T-cell (primary cell): ENCODE measurements at regions of chr1 and their contacts with region 1.

Region 1: DNA sequence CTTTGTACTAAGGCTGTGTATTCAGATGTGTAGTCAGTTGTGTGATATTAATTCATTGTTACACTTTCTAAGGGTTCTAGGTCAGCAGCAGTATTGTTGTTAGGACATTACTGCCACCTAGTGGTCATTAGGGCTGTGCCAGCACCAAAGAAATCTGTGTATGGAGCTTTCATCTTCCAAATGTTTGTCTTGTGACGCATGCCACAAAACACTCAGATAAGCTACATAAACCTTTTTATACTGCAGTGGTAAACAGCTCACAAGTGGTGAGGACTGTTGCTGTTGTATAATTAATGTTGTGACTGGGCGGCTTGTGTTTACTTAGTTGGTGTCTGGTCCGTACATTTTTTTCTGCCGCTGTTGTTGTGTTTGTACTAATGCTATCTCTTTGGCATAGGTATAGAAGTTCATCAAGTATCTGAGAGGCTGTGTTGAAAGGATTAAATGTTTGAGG is 51.7 kb downstream of the S1PR1 start:
- DNase-seq: peak in 34 of 35 experiments; percentile 29 to 90 (median 62)
- ATAC-seq: peak; percentile 62 to 68 (median 64)
- H3K4me3 ChIP-seq: no peak overlapping the region
- H3K4me3 Mint-ChIP-seq: peak overlapping the region in 2 of 3 donors; percentile 4 to 24
- H3K27ac ChIP-seq: peak overlapping the region; percentile 35
- H3K27ac Mint-ChIP-seq: peak overlapping the region; percentile 79 to 85
- H3K4me1 ChIP-seq: peaks cover 70 to 75% of the 10 kb centered on the region in 2 experiments
- H3K4me1 Mint-ChIP-seq: peaks cover 76 to 89% (median 84%) of the 10 kb centered on the region in 3 donors
- H3K27me3 ChIP-seq: no peaks in the 10 kb centered on the region
- H3K27me3 Mint-ChIP-seq: no peaks in the 10 kb centered on the region

Region 2: DNA sequence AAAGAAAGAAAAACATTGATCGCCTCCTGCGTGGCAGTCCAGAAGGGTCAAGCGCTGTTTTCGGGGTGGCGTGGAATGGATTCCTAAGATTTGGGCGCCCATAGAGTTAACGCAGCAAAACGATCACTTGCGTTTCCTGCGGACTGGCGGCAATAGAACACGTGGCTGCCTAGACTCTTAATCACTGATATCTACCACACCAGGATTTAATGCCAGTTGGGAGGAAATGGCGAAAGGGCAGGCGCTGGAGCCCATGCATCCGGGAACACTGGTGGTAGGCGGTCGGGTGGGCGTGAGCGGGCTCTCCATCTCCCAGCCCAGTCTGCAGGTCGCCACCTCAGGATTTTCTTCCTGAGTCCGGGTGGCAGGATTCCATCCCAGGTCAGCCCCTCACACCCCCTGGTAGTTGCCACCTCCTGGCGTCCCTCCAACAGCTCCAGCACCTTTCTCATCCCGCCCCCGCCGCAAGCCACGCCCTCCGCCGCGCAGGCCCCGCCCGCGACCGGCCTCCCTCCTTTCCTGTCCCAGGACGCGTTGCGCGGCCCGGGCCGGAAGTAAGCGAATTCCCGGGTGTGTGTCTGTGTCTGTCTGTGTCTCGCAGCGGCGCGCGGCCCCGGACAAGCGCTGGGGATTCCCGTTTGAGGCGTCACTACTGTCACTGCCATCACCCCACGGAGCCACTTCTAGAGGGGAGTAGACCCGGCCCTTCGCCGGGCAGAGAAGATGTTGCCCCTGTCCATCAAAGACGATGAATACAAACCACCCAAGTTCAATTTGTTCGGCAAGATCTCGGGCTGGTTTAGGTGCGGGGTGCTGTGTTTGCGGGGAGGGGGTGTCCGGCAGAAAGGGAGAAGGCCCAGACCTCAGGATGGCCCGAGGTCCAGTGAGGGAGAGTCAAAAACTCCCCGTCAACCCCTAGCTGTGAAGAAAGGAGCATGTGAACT is 392.7 kb before region 1 on chr1 and contains the start of gene SLC30A7:
- CTCF ChIA-PET with region 1: interaction called in 1 of 2 experiments, 10 read pairs
- POLR2A ChIA-PET with region 1: interaction called in 1 of 2 experiments, 3 read pairs
- DNase-seq: peak; percentile 91 to 98 (median 95)
- ATAC-seq: peak; percentile 83 to 88 (median 85)
- H3K4me3 ChIP-seq: peak within 1 kb of the TSS; percentile 87 to 99
- H3K4me3 Mint-ChIP-seq: peak within 1 kb of the TSS; percentile 99 to 100 (median 100)
- H3K27ac ChIP-seq: peak within 1 kb of the TSS; percentile 98
- H3K27ac Mint-ChIP-seq: peak within 1 kb of the TSS; percentile 99
- H3K4me1 ChIP-seq: peaks cover 5 to 29% of the 10 kb centered on the region in 2 experiments
- H3K4me1 Mint-ChIP-seq: peaks cover 47 to 57% (median 55%) of the 10 kb centered on the region in 3 donors
- H3K27me3 ChIP-seq: no peaks in the 10 kb centered on the region
- H3K27me3 Mint-ChIP-seq: no peaks in the 10 kb centered on the region
- total RNA-seq, gene SLC30A7: 28.8 to 44.1 (median 36.9) TPM

Region 3: DNA sequence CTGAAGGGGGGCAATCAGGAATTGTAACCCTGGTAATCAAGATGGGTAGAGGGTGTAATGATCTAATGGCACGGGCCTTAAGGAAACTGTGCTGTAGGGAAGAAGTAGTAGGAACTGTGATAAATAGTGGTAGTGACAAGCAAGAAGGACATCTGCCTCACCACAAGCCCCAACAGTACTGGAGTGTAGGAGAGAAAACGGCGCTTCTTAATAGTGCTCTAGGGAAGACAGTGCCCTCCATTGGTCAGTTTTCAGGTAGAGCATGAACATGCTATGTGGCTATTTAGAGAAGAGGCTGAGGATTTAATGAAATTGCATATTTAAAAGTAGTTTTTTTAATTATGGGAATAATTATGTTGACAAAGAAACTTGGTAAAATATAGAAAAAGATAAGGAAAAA is 360.4 kb before region 1 on chr1:
- CTCF ChIA-PET with region 1: interaction called, 6 to 92 read pairs
- POLR2A ChIA-PET with region 1: interaction called, 3 to 5 read pairs
- DNase-seq: peak in 1 of 35 experiments; percentile 57
- ATAC-seq: no peak
- H3K4me3 ChIP-seq: peak overlapping the region; percentile 23 to 50
- H3K4me3 Mint-ChIP-seq: no peak overlapping the region
- H3K27ac ChIP-seq: peak overlapping the region; percentile 78
- H3K27ac Mint-ChIP-seq: no peak overlapping the region
- H3K4me1 ChIP-seq: peaks cover 32 to 82% of the 10 kb centered on the region in 2 experiments
- H3K4me1 Mint-ChIP-seq: peaks cover 17 to 38% (median 37%) of the 10 kb centered on the region in 3 donors
- H3K27me3 ChIP-seq: no peaks in the 10 kb centered on the region
- H3K27me3 Mint-ChIP-seq: no peaks in the 10 kb centered on the region

Region 4: GRCh38 chr1:101095576-101095975 is 192.9 kb before region 1 on chr1:
- CTCF ChIA-PET with region 1: no interaction called
- POLR2A ChIA-PET with region 1: no interaction called
- DNase-seq: no peak
- ATAC-seq: no peak
- H3K4me3 ChIP-seq: no peak overlapping the region
- H3K4me3 Mint-ChIP-seq: no peak overlapping the region
- H3K27ac ChIP-seq: no peak overlapping the region
- H3K27ac Mint-ChIP-seq: no peak overlapping the region
- H3K4me1 ChIP-seq: no peaks in the 10 kb centered on the region
- H3K4me1 Mint-ChIP-seq: peaks cover 0 to 5% (median 5%) of the 10 kb centered on the region in 3 donors
- H3K27me3 ChIP-seq: no peaks in the 10 kb centered on the region
- H3K27me3 Mint-ChIP-seq: no peaks in the 10 kb centered on the region

Region 5: GRCh38 chr1:101238681-101239094 is 49.8 kb before region 1 on chr1:
- CTCF ChIA-PET with region 1: interaction called, 10 to 82 read pairs
- POLR2A ChIA-PET with region 1: interaction called, 5 to 6 read pairs
- DNase-seq: peak; percentile 51 to 90 (median 81)
- ATAC-seq: peak; percentile 18 to 38 (median 32)
- H3K4me3 ChIP-seq: peak overlapping the region; percentile 67 to 99
- H3K4me3 Mint-ChIP-seq: peak overlapping the region; percentile 97 to 99 (median 98)
- H3K27ac ChIP-seq: peak overlapping the region; percentile 56
- H3K27ac Mint-ChIP-seq: peak overlapping the region; percentile 98 to 100
- H3K4me1 ChIP-seq: peaks cover 44 to 50% of the 10 kb centered on the region in 2 experiments
- H3K4me1 Mint-ChIP-seq: peaks cover 60 to 64% (median 62%) of the 10 kb centered on the region in 3 donors
- H3K27me3 ChIP-seq: no peaks in the 10 kb centered on the region
- H3K27me3 Mint-ChIP-seq: no peaks in the 10 kb centered on the region

Region 6: DNA sequence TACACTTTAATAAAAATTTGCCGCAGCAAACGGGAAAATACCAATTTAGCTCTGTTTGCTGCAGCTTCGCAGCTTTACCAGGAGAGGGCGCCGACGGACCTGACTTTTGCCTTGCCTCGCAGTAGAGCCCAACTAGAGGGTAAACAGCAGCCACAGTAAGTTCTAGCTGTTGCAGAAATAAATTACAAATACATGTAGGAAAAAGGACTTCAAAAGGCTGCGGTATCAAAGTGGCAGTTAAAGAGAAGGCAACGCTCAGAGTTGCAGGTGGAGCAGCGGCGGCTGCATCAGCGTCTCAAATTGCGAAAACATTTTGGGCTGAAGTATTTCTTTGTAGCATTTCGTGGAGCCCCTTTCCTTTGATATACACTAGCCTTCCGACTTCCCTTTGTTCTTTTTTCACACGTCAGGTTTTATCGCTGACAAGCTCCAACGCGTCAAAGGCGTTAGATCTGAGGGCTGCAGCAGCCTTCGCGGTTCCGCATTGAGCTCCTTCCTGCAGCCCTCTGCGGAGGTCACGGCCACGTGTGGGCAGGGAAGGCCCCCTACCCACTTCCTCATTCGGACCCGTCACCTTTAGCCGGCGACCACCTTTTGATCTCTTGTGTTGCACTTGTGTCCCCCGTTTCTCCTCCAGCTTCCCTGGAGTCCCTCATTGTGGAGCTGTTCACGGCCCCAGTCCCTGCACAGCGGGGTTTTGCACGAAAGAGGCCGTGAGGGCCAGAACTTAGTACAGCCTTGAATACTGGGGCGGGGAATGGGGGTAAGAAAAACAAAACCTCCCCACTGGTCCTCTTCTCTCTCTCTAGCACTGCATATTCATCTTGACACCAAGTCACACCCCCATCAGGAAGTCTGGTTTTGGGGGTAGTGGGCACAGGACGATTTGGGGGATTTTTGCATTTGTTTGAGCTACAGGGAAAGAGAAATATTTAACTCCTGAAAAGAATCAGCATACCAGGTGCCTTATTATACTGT is 21.1 kb after region 1 on chr1:
- CTCF ChIA-PET with region 1: interaction called, 11 to 111 read pairs
- POLR2A ChIA-PET with region 1: interaction called in 1 of 2 experiments, 11 read pairs
- DNase-seq: peak; percentile 56 to 93 (median 78)
- ATAC-seq: peak; percentile 79 to 82 (median 80)
- H3K4me3 ChIP-seq: peak overlapping the region; percentile 27 to 38
- H3K4me3 Mint-ChIP-seq: peak overlapping the region; percentile 78 to 79 (median 79)
- H3K27ac ChIP-seq: peak overlapping the region; percentile 90
- H3K27ac Mint-ChIP-seq: peak overlapping the region; percentile 97 to 98
- H3K4me1 ChIP-seq: peaks cover 41 to 62% of the 10 kb centered on the region in 2 experiments
- H3K4me1 Mint-ChIP-seq: peaks cover 72 to 83% (median 74%) of the 10 kb centered on the region in 3 donors
- H3K27me3 ChIP-seq: no peaks in the 10 kb centered on the region
- H3K27me3 Mint-ChIP-seq: no peaks in the 10 kb centered on the region